Activated CD4-positive, alpha-beta T cell treated with anti-CD3 and anti-CD28 coated beads for 36 hours (primary cell): ENCODE measurements at regions of chr19 and their contacts with region 1.

Region 1: DNA sequence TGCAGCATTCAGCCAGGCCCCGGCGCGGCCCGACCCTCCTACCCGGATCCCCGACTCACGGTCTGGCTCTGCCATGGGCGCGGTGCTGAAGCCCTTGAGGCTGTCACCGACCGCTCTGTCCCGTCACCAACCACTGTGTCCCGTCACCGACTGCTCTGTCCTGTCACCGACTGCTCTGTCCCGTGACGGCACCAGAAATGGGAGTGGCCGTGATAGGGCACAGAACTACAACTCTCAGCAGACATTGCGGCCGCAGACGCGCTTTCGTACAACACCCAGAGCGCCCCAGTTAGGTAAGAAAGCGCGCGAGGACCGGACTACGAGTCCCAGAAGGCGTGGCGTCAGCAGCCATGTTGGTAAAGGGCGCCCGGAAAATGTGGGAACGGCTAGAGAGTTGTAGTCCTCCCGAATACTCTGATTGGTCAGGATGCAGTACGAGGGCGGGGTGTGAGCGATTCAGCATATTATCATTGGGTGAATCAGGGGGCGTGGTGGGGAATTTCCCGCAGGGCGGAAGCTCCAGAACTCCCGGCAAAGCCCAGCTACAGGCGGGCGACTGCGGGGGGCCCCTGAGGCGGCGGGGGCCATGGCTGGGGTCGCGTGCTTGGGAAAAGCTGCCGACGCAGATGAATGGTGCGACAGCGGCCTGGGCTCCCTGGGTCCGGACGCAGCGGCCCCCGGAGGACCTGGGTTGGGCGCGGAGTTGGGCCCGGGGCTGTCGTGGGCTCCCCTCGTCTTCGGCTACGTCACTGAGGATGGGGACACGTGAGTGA is at the starts of genes NFKBIB and SIRT2:
- DNase-seq: peak; percentile 100
- ATAC-seq: peak; percentile 93
- H3K4me3 Mint-ChIP-seq: peak within 1 kb of the TSS; percentile 88
- H3K27ac Mint-ChIP-seq: peak within 1 kb of the TSS; percentile 91
- H3K4me1 Mint-ChIP-seq: peaks cover 40% of the 10 kb centered on the region
- H3K27me3 Mint-ChIP-seq: no peaks in the 10 kb centered on the region
- total RNA-seq, gene NFKBIB: 49.4 to 52.5 TPM
- total RNA-seq, gene SIRT2: 17.8 to 23.1 TPM

Region 2: DNA sequence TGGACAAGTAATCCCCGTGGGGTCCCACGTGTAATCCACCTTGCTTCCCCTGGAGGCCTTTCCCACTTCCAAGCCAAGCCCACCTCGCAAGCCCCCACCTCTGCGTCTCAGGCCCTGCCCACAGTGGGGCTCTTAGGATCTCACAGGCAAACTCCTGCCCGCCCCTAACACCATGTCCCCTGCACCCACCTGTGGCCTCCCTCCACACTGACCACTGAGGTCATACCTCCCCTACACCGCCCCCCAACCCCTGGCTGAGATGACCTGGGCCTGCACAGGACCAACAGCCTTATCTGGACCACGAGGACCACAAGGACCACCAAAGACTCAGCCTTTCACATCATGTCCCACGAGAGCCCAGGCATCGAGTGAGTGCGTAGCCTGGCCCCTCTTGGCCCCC is 531.9 kb before region 1 on chr19:
- CTCF ChIA-PET with region 1: no interaction called
- POLR2A ChIA-PET with region 1: no interaction called
- intact Hi-C with region 1: no loop called
- DNase-seq: no peak
- ATAC-seq: no peak
- H3K4me3 Mint-ChIP-seq: no peak overlapping the region
- H3K27ac Mint-ChIP-seq: no peak overlapping the region
- H3K4me1 Mint-ChIP-seq: peaks cover 3% of the 10 kb centered on the region
- H3K27me3 Mint-ChIP-seq: peaks cover 14% of the 10 kb centered on the region

Region 3: DNA sequence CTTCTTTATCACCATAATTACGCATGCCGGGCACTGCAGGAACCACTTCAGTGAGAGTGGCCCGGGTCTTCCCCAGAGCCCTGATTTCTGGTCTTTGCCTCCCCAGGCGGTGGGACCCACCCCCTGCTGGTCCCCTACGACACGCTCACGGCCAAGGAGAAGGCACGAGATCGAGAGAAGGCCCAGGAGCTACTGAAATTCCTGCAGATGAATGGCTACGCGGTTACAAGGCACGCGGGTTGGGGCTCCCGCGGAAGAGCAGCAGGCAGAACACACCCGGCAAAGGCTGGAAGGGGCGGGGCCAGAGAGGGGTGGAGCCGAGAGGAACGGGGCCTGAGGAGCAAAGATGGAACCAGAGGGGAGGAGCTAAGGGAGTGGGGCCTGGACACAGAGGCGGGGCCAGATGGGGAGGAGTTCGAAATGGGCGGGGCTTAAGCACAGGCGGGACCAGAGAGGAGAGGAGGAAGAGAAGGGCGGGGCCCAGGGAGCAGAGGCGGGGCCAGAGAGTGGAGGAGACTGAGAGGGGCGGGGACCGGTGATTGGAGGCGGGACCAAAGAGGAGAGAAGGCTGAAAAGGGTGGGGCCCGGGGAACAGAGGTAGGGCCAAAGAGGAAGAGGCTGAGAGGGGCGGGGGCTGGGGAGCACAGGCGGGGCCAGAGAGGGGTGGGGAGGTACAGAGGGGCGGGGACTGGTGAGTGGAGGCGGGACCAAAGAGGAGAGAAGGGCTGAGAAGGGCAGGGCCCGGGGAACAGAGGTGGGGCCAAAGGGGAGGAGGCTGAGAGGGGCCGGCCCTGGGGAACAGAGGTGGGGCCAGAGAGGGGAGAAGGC is 392.7 kb before region 1 on chr19:
- CTCF ChIA-PET with region 1: no interaction called
- POLR2A ChIA-PET with region 1: no interaction called
- intact Hi-C with region 1: loop called in 1 of 2 experiments (anchors 1 kb)
- DNase-seq: peak; percentile 98
- ATAC-seq: peak; percentile 94
- H3K4me3 Mint-ChIP-seq: no peak overlapping the region
- H3K27ac Mint-ChIP-seq: no peak overlapping the region
- H3K4me1 Mint-ChIP-seq: peaks cover 6% of the 10 kb centered on the region
- H3K27me3 Mint-ChIP-seq: peaks cover 2% of the 10 kb centered on the region

Region 4: GRCh38 chr19:38736413-38737280 is 163.0 kb before region 1 on chr19:
- CTCF ChIA-PET with region 1: no interaction called
- POLR2A ChIA-PET with region 1: no interaction called
- intact Hi-C with region 1: loop called in 1 of 2 experiments (anchors 1 kb)
- DNase-seq: peak; percentile 89
- ATAC-seq: peak; percentile 40
- H3K4me3 Mint-ChIP-seq: peak overlapping the region; percentile 60
- H3K27ac Mint-ChIP-seq: no peak overlapping the region
- H3K4me1 Mint-ChIP-seq: peaks cover 33% of the 10 kb centered on the region
- H3K27me3 Mint-ChIP-seq: peaks cover 7% of the 10 kb centered on the region

Region 5: GRCh38 chr19:38831142-38831605 is 68.5 kb before region 1 on chr19:
- CTCF ChIA-PET with region 1: no interaction called
- POLR2A ChIA-PET with region 1: no interaction called
- intact Hi-C with region 1: loop called (anchors 1 kb)
- DNase-seq: peak; percentile 58
- ATAC-seq: peak; percentile 53
- H3K4me3 Mint-ChIP-seq: peak overlapping the region; percentile 87
- H3K27ac Mint-ChIP-seq: peak overlapping the region; percentile 83
- H3K4me1 Mint-ChIP-seq: peaks cover 25% of the 10 kb centered on the region
- H3K27me3 Mint-ChIP-seq: no peaks in the 10 kb centered on the region

Region 6: GRCh38 chr19:38862321-38863059 is 37.1 kb before region 1 on chr19:
- CTCF ChIA-PET with region 1: no interaction called
- POLR2A ChIA-PET with region 1: no interaction called
- intact Hi-C with region 1: no loop called
- DNase-seq: no peak
- ATAC-seq: no peak
- H3K4me3 Mint-ChIP-seq: no peak overlapping the region
- H3K27ac Mint-ChIP-seq: no peak overlapping the region
- H3K4me1 Mint-ChIP-seq: peaks cover 36% of the 10 kb centered on the region
- H3K27me3 Mint-ChIP-seq: no peaks in the 10 kb centered on the region

Region 7: DNA sequence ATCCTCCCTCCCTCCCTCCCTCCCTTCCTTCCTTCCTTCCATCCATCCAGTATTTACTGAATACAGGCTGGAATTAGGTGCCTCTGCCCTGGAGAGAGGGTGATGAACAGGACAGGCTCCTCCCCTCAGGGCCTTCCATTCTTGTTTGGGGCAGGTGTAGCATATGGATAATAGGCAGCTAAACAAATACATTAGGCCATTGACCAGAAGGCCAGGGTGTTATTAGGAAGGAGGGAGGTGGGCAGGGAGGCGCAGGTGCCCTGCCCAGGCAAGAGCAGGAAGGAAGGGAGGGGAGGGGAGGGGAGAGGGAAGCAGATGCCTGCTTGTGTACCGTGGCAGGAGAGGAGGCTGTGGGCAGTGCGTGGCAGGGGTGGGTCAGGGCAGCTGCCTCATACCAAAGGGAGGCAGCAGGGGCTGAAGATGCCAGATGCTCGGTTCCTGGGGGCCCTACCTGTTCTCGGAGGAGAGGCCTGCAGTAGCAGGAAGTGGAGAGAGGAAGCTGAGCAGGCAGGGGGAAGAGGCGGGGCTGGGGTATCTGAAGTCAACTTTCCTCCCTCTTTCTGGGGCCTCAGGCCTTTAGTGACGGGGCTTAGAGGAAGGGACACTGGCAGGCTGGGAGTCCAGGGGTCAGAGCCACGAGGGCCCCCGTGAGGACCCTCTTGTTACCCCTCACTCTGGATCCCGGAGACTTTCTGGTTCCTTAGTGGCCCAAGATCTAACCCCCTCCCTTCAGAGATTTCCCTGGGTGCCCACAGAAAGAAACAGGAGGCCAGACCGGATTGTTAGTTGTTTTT is 21.7 kb before region 1 on chr19 and contains the start of gene RINL:
- CTCF ChIA-PET with region 1: interaction called, 3 read pairs
- POLR2A ChIA-PET with region 1: interaction called, 4 read pairs
- intact Hi-C with region 1: loop called in 1 of 2 experiments (anchors 1 kb)
- DNase-seq: peak; percentile 84
- ATAC-seq: peak; percentile 93
- H3K4me3 Mint-ChIP-seq: peak within 1 kb of the TSS; percentile 89
- H3K27ac Mint-ChIP-seq: peak within 1 kb of the TSS; percentile 99
- H3K4me1 Mint-ChIP-seq: peaks cover 27% of the 10 kb centered on the region
- H3K27me3 Mint-ChIP-seq: no peaks in the 10 kb centered on the region
- total RNA-seq, gene RINL: 85.8 to 90.3 TPM